Naive thymus-derived CD8-positive, alpha-beta T cell (primary cell): ENCODE measurements at regions of chr19 and their contacts with region 1.

Region 1: DNA sequence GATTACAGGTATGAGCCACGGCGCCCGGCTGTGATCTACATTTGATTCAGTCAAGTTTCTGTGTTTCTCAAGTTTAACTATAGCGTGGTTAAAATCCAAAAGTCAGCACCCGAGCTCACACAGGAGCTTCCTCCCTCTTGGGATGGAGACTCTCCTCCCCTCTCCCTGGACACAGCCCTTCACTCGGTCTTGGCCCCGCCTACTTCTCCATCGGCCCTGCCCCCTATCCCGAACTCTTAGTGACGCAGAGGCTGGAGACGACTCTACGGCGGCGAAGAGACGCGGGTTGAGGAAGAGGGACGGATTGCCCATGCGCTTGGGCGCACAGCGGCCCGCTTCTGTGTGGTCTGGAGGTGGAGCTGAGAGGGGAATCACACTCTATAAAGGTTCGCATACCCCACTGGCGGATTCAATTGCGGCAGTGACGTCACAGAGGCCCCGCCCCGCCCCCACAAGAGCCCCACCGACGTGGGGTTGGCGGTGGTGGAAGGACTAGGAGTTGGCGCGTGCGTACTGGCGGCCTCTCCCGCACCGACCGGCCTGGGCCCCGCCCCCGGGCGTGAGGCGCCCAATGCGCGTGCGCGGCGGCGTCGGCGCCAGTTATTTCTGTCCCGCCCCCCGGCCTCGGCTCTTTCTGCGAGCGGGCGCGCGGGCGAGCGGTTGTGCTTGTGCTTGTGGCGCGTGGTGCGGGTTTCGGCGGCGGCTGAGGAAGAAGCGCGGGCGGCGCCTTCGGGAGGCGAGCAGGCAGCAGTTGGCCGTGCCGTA is at the start of gene TRIM28:
- DNase-seq: peak; percentile 99 to 100 (median 100)
- ATAC-seq: peak; percentile 90 to 92
- H3K4me3 Mint-ChIP-seq: peak within 1 kb of the TSS; percentile 91 to 97 (median 96)
- H3K27ac Mint-ChIP-seq: peak within 1 kb of the TSS; percentile 97 to 100 (median 99)
- H3K4me1 Mint-ChIP-seq: peaks cover 26 to 38% (median 32%) of the 10 kb centered on the region in 4 donors
- H3K27me3 Mint-ChIP-seq: peaks cover 0 to 11% (median 4%) of the 10 kb centered on the region in 5 donors
- polyA plus RNA-seq, gene TRIM28: 55.7 to 114 (median 62.7) TPM

Region 2: DNA sequence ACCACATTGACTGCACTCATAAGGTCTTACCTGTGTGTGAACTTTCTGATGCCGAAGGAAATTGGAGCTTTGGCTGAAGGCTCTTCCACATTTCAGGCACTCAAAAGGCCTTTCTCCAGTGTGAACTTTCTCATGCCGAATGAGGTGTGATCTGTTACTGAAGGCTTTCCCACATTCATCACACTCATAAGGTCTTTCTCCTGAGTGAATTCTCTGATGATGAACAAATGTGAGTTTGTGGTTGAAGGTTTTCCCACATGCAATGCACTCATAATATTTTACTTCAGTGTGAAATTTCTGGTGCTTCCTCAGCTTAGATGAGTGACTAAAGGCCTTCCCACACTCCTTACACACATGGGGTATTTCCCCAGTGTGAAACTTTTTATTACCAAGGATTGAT is 109.8 kb before region 1 on chr19:
- POLR2A ChIA-PET with region 1: no interaction called
- DNase-seq: no peak
- ATAC-seq: no peak
- H3K4me3 Mint-ChIP-seq: no peak overlapping the region
- H3K27ac Mint-ChIP-seq: no peak overlapping the region
- H3K4me1 Mint-ChIP-seq: peaks cover 11 to 16% (median 14%) of the 10 kb centered on the region in 4 donors
- H3K27me3 Mint-ChIP-seq: no peaks in the 10 kb centered on the region

Region 3: GRCh38 chr19:58572818-58573657 is 29.0 kb after region 1 on chr19 and contains the start of gene MZF1:
- POLR2A ChIA-PET with region 1: interaction called, 15 read pairs
- DNase-seq: peak; percentile 96 to 100 (median 100)
- ATAC-seq: peak; percentile 70 to 76
- H3K4me3 Mint-ChIP-seq: peak within 1 kb of the TSS; percentile 88 to 100 (median 98)
- H3K27ac Mint-ChIP-seq: peak within 1 kb of the TSS; percentile 99 to 100 (median 100)
- H3K4me1 Mint-ChIP-seq: peaks cover 29 to 55% (median 45%) of the 10 kb centered on the region in 4 donors
- H3K27me3 Mint-ChIP-seq: peaks cover 0 to 5% (median 0%) of the 10 kb centered on the region in 5 donors
- polyA plus RNA-seq, gene MZF1: 9.1 to 12.7 (median 11.7) TPM